ENCODE measurements at regions of chr1 and their contacts with region 1.

Region 1: DNA sequence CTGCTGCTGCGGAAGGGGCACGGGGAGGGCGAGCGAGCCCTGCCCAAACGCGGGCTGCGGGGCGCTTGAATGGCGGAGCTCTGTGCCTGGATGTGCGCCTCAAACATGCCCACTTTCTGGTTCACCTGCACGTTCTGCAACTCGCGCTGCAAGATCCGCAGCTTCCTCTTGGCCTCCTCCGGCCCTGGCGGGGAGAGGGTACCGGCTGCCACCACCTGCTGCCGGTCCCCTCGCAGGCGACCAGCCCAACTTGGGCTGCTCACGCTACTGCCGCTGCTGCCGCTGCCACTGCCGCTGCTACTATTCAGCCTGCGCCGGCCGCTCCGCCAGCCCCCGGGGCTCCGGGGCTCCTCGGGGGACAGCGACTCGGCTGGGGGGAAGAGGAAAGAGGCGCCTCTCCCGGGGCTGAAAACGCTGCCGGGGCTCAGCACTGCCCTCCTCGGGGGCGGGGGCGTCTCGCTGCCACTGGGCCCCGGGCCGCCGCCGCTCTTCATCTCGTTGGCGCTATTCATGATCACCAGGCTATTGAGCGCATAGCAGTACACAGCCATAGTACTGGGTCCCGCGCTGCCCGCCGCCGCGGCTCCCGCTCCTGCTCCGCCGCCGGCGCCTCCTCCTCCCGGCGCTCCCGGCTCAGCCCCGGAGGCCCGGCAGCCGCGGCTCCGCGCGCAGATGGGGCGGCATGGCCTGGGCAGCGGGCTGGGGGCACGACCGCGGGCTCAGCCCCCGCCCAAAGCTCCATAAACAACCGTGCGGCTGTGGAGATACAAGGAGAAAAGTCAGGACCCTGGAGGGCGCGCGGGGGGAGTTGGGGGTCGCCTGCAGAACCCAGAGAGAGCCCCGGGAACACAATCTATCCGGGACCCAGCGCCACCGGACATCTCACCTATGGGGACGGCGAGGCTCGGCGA is 1.9 kb downstream of the ITPKB start:
- DNase-seq: peak in 1 of 2 donors; percentile 67
- H3K4me3 ChIP-seq: peak overlapping the region; percentile 87 to 95
- H3K27ac ChIP-seq: peak overlapping the region; percentile 75 to 93
- H3K4me1 ChIP-seq: peaks cover 25 to 48% of the 10 kb centered on the region in 2 donors
- H3K27me3 ChIP-seq: no peaks in the 10 kb centered on the region
- CTCF ChIP-seq: peak in 2 of 3 experiments; percentile 7 to 27

Region 2: GRCh38 chr1:226626577-226626956 is 110.6 kb before region 1 on chr1:
- intact Hi-C with region 1: loop called (anchors 2 kb)
- DNase-seq: peak; percentile 30 to 87
- H3K4me3 ChIP-seq: peak overlapping the region in 1 of 2 donors; percentile 9
- H3K27ac ChIP-seq: peak overlapping the region in 1 of 2 donors; percentile 52
- H3K4me1 ChIP-seq: peaks cover 0 to 4% of the 10 kb centered on the region in 2 donors
- H3K27me3 ChIP-seq: no peaks in the 10 kb centered on the region
- CTCF ChIP-seq: peak; percentile 91 to 97 (median 96)

Region 3: DNA sequence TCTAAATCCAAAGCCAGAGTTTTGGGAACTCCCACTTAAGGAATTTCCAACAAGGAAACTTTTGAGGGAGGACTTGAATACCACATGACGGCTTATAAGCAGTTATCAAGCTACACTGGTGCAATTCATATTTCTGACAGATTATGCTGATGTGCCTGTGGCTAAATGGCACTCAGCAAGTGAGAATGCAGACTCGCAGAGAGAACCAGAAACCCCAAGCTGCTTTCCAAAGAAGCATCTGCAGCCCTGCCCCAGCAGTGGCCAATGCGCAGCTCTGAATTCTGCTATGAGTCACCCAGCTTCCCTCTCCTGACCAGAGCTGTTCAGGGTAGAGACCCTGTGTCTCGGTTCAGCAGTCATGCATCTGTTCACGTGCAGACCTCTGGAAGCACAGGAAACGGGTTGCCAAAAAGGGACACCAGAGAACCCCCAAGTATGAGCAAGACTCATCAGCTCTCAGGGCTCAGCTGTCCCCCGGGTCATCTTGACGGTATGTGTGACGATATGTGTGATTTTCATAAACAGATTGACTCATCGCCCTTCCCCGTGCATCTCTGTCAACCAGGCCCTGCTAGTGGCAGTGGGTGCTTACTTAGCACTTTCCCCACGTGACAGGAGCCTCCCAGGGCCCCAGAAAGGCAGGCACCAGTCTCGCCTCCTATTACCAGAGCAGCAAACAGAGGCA is 74.4 kb before region 1 on chr1:
- intact Hi-C with region 1: loop called (anchors 2 kb)
- DNase-seq: peak; percentile 92 to 95
- H3K4me3 ChIP-seq: peak overlapping the region in 1 of 2 donors; percentile 32
- H3K27ac ChIP-seq: peak overlapping the region; percentile 91 to 95
- H3K4me1 ChIP-seq: peaks cover 46 to 82% of the 10 kb centered on the region in 2 donors
- H3K27me3 ChIP-seq: no peaks in the 10 kb centered on the region
- CTCF ChIP-seq: no peak

Region 4: DNA sequence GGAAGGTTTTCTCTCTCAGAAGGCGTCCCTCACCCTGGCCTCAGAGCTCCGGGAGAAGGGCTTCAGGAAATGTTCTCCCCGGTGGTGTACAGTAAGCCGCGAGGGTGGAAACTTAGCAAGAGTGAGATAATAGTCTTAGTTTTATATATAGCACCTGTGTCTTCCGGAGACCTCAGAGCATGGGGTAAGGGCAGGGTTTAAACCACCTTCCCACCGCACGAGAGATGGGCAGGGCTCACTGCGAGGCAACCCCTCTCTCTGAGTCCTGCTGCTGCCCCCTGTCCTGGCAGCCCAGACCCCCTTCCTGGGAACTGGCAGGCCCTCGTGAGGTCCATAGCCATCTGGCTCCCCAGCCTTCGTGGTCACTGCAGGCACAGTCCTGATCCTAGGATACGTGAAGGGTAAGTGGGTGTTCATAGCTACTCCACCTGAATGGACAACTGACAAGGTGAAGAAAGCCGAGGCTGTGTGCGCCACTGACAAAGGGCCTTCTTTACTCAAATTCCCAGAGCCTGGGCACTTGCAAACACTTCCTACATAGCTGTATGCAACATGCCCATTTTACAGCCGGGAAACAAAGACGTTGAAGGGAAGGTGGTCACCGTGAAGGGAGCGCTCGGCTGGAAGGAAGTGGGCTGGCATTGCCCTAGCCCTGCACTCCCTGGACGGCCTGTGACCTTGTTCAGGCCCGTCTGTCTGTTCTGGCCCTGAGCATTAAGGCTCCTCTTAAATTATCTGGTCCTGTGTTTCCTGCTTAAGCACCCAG is 25.0 kb before region 1 on chr1:
- intact Hi-C with region 1: loop called (anchors 2 kb)
- DNase-seq: no peak
- H3K4me3 ChIP-seq: no peak overlapping the region
- H3K27ac ChIP-seq: no peak overlapping the region
- H3K4me1 ChIP-seq: peaks cover 3 to 10% of the 10 kb centered on the region in 2 donors
- H3K27me3 ChIP-seq: no peaks in the 10 kb centered on the region
- CTCF ChIP-seq: no peak

Region 5: GRCh38 chr1:226827968-226828513 is 90.9 kb after region 1 on chr1:
- intact Hi-C with region 1: loop called (anchors 2 kb)
- DNase-seq: peak; percentile 71 to 98
- H3K4me3 ChIP-seq: peak overlapping the region in 1 of 2 donors; percentile 33
- H3K27ac ChIP-seq: peak overlapping the region; percentile 55 to 64
- H3K4me1 ChIP-seq: no peaks in the 10 kb centered on the region
- H3K27me3 ChIP-seq: no peaks in the 10 kb centered on the region
- CTCF ChIP-seq: peak; percentile 93 to 97 (median 93)

Region 6: DNA sequence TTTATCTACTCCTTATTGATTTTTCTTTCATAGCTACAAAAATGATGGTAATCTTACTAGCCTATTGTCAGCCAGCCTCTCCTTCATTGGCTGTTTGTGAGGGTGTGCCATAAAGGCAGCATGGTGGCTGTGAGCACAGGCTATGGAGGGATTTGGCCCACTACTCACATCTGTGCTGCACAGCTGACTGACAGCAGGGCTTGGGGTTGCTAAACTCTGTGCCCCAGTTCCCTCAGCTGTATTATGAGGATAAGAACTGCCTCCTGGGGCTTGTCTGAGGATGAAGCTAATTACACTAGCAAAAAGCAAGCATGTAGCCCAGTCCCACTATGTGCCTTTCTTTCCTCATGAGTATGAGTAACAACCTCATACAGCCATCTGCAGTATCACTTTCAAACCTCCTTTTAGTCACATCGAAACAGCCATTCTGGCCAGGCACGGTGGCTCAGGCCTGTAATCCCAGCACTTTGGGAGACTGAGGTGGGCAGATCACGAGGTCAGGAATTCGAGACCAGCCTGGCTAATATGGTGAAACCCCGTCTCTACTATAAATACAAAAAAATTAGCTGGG is 269.1 kb after region 1 on chr1:
- intact Hi-C with region 1: no loop called
- DNase-seq: no peak
- H3K4me3 ChIP-seq: no peak overlapping the region
- H3K27ac ChIP-seq: no peak overlapping the region
- H3K4me1 ChIP-seq: no peaks in the 10 kb centered on the region
- H3K27me3 ChIP-seq: no peaks in the 10 kb centered on the region
- CTCF ChIP-seq: no peak